Caco-2 (cell line): ENCODE measurements at regions of chr3 and their contacts with region 1.

Region 1: GRCh38 chr3:33787328-33788009 is 11.0 kb upstream of the PDCD6IP start:
- DNase-seq: peak; percentile 70 to 71
- H3K4me3 ChIP-seq: peak overlapping the region; percentile 38
- H3K4me3 Mint-ChIP-seq: peak overlapping the region; percentile 63
- H3K27ac Mint-ChIP-seq: no peak overlapping the region
- H3K4me1 ChIP-seq: no peaks in the 10 kb centered on the region
- H3K4me1 Mint-ChIP-seq: peaks cover 11% of the 10 kb centered on the region
- H3K27me3 ChIP-seq: no peaks in the 10 kb centered on the region
- H3K27me3 Mint-ChIP-seq: no peaks in the 10 kb centered on the region
- CTCF ChIP-seq: peak; percentile 75 to 82

Region 2: GRCh38 chr3:33131331-33132018 is 656.0 kb before region 1 on chr3:
- CTCF ChIA-PET with region 1: interaction called, 14 read pairs
- POLR2A ChIA-PET with region 1: no interaction called
- intact Hi-C with region 1: loop called (anchors 1 kb)
- DNase-seq: peak; percentile 59 to 76
- H3K4me3 ChIP-seq: no peak overlapping the region
- H3K4me3 Mint-ChIP-seq: no peak overlapping the region
- H3K27ac Mint-ChIP-seq: peak overlapping the region; percentile 77
- H3K4me1 ChIP-seq: peaks cover 18% of the 10 kb centered on the region
- H3K4me1 Mint-ChIP-seq: no peaks in the 10 kb centered on the region
- H3K27me3 ChIP-seq: no peaks in the 10 kb centered on the region
- H3K27me3 Mint-ChIP-seq: no peaks in the 10 kb centered on the region
- CTCF ChIP-seq: peak; percentile 59 to 75

Region 3: DNA sequence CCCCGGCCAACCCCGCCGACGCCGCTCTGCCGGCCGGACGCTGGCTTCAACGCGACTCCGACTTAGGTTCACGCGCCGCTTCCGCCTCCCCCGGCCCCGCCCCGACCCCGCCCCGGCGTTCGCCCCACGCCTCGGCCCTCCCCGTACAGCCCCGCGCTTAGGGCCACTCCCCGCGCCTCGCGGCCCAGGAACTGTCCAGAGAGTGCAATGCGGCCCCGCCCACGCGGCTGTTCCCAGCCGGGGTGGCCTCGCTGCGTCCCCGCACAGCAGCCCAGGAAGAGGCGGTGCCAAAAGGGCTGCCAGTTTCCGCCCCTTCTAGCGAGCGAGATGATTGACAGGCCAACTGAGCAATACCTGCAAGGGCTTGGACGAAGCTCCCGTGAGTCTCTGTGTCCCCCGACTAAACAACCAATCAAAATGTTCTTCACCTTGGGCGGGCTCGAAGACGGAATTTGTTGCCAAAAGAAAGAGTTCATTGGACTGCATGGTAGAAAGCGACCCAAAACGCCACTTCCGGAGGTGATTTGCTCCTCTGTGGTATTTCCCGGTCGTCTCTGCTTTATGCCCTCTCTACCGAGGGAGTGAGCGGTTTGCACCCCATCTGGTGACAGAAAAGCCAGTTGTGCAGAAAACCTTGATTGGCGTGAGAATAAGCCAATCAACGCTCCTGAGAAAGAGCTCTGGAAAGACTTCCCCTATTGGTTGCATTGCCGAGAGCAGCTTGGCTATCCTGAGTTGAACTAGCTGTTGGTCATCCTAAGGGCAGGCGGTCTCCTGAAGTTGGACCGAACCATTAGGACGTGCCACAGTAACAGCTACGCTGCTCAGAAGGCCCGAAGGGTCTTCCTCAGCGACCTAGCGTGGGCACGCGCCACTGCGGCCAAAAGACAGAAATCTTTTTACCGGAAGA is 346.9 kb before region 1 on chr3 and contains the start of gene UBP1:
- CTCF ChIA-PET with region 1: interaction called, 3 read pairs
- POLR2A ChIA-PET with region 1: interaction called, 3 read pairs
- intact Hi-C with region 1: loop called (anchors 5 kb)
- DNase-seq: peak; percentile 99
- H3K4me3 ChIP-seq: peak within 1 kb of the TSS; percentile 100
- H3K4me3 Mint-ChIP-seq: peak within 1 kb of the TSS; percentile 98
- H3K27ac Mint-ChIP-seq: peak within 1 kb of the TSS; percentile 99
- H3K4me1 ChIP-seq: peaks cover 30% of the 10 kb centered on the region
- H3K4me1 Mint-ChIP-seq: peaks cover 23% of the 10 kb centered on the region
- H3K27me3 ChIP-seq: no peaks in the 10 kb centered on the region
- H3K27me3 Mint-ChIP-seq: no peaks in the 10 kb centered on the region
- CTCF ChIP-seq: no peak
- total RNA-seq, gene UBP1: 87.7 and 90.8 TPM in 2 replicates

Region 4: DNA sequence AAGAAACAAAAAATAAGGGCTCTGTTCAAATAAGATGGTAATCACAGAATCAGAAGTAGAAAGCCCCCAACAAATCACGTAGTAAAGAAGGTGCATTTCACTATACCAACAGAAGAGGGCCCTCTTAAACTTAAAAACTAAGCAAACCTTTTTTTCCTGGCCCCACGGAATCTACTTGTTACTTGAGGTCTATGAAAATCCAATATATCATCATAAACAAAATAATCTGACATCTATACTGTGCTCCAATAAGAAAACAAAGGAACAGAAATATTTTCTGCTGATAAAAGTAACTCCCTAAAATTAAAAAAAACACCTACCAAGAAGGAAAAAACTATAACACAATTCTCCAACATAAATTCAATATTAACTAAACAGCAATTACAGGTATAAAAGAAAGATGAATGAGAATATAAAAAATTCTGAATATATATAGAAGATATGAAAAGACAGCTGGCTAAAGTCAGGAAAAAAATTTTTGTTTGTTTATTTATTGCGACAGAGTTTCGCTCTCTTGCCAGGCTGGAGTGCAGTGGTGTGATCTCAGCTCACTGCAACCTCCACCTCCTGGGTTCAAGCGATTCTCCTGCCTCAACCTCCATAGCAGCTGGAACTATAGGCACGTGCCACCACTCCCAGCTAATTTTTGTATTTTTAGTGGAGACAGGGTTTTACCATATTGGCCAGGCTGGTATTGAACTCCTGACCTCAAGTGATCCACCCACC is 151.2 kb before region 1 on chr3:
- CTCF ChIA-PET with region 1: interaction called, 9 read pairs
- POLR2A ChIA-PET with region 1: no interaction called
- intact Hi-C with region 1: loop called (anchors 1 kb)
- DNase-seq: peak in 1 of 2 experiments; percentile 19
- H3K4me3 ChIP-seq: no peak overlapping the region
- H3K4me3 Mint-ChIP-seq: no peak overlapping the region
- H3K27ac Mint-ChIP-seq: no peak overlapping the region
- H3K4me1 ChIP-seq: peaks cover 20% of the 10 kb centered on the region
- H3K4me1 Mint-ChIP-seq: peaks cover 6% of the 10 kb centered on the region
- H3K27me3 ChIP-seq: no peaks in the 10 kb centered on the region
- H3K27me3 Mint-ChIP-seq: no peaks in the 10 kb centered on the region
- CTCF ChIP-seq: peak; percentile 39 to 48

Region 5: GRCh38 chr3:33798411-33799201 is 11.1 kb after region 1 on chr3 and contains the start of gene PDCD6IP:
- CTCF ChIA-PET with region 1: interaction called, 14 read pairs
- POLR2A ChIA-PET with region 1: interaction called, 26 read pairs
- intact Hi-C with region 1: no loop called
- DNase-seq: peak; percentile 95 to 96
- H3K4me3 ChIP-seq: peak within 1 kb of the TSS; percentile 75
- H3K4me3 Mint-ChIP-seq: peak within 1 kb of the TSS; percentile 91
- H3K27ac Mint-ChIP-seq: peak within 1 kb of the TSS; percentile 91
- H3K4me1 ChIP-seq: peaks cover 10% of the 10 kb centered on the region; the same call in 1 of the 2 replicates
- H3K4me1 Mint-ChIP-seq: peaks cover 16% of the 10 kb centered on the region
- H3K27me3 ChIP-seq: no peaks in the 10 kb centered on the region
- H3K27me3 Mint-ChIP-seq: no peaks in the 10 kb centered on the region
- CTCF ChIP-seq: no peak
- total RNA-seq, gene PDCD6IP: 183 and 185 TPM in 2 replicates